ENCODE measurements at regions of chr12 and their contacts with region 1.

Region 1: GRCh38 chr12:53938326-53939140 is at the start of gene HOXC13:
- ATAC-seq: peak; percentile 87 to 93 (median 91)
- H3K4me3 ChIP-seq: peak within 1 kb of the TSS; percentile 24 to 39 (median 33)
- H3K27ac ChIP-seq: no peak within 1 kb of the TSS
- H3K4me1 ChIP-seq: peaks cover 0 to 4% of the 10 kb centered on the region in 2 donors
- total RNA-seq, gene HOXC13: 0.05 to 4.7 (median 0.38) TPM in 6 of 8 experiments, not detected in the others

Region 2: DNA sequence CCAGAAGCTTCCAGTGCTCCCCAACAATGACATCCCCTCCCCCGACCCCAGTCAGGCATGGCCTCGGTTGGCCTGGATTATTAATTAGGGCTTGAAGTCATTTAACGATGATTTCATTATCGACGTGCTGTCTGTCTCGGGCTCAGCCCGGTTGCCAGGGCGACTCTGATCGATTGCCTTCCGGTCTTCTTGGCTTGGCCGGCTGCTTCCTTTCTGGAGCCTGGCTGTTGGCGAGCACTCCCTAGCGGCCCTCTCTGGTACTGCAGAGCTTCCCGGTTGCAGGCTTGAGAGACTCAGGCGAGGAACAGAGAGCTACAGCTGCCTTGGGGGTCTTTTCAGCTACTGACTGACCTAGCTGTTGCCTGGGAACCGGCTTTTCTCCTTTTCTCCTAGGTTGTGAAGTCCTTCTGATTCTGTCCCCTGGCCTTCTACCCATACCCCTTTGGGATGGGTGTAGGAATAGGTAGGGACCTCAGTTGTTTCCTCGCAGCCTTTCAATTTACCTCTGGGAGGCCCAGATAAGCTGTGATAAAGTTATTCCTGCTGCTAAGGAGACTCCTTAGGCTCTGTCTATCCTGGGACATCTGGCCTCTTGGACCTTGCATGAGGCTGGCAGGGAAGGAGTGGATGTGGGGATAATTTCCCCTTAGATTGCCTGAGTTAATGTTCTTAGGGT is 181.3 kb before region 1 on chr12:
- in situ Hi-C with region 1: loop called in 1 of 9 experiments (anchors 25 kb)
- ATAC-seq: peak; percentile 70 to 89 (median 80)
- H3K4me3 ChIP-seq: peak overlapping the region in 2 of 5 donors; percentile 7 to 12
- H3K27ac ChIP-seq: peak overlapping the region in 1 of 2 donors; percentile 31
- H3K4me1 ChIP-seq: peaks cover 40 to 41% of the 10 kb centered on the region in 2 donors

Region 3: DNA sequence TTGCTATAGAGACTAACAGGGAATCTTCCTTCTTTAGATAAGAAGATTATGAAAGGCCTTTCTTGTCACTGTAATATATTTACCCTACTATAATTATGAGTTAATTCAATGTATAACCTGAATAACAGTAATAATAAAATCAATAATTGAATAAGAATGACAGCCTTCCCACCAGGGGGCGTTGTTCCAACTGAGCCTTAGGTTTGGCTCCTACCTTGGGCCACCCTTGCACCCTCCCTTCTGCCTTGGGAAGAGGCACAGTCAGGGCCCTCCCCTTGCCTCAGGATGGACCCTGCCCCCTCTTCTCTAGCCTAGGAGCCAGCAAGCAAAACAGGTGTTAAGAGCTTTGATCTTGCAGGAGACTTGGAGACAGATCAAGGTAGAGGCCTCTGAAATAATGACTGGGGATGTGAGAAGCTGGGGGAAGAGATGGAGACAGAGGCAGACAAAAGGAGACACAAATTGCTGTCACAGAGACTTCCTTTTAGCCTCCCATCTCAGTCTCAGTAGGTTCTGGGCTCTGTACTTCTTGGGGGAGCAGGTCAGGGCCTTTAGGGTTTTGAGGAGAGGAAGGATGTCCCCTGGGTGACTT is 146.7 kb before region 1 on chr12:
- in situ Hi-C with region 1: loop called in 1 of 9 experiments (anchors 25 kb)
- ATAC-seq: peak in 1 of 8 experiments; percentile 49
- H3K4me3 ChIP-seq: no peak overlapping the region
- H3K27ac ChIP-seq: no peak overlapping the region
- H3K4me1 ChIP-seq: peaks cover 0 to 12% of the 10 kb centered on the region in 2 donors

Region 4: GRCh38 chr12:53820516-53821306 is 117.8 kb before region 1 on chr12:
- in situ Hi-C with region 1: loop called in 1 of 9 experiments (anchors 25 kb)
- ATAC-seq: peak in 3 of 8 experiments; percentile 85 to 94 (median 87)
- H3K4me3 ChIP-seq: no peak overlapping the region
- H3K27ac ChIP-seq: no peak overlapping the region
- H3K4me1 ChIP-seq: no peaks in the 10 kb centered on the region

Region 5: DNA sequence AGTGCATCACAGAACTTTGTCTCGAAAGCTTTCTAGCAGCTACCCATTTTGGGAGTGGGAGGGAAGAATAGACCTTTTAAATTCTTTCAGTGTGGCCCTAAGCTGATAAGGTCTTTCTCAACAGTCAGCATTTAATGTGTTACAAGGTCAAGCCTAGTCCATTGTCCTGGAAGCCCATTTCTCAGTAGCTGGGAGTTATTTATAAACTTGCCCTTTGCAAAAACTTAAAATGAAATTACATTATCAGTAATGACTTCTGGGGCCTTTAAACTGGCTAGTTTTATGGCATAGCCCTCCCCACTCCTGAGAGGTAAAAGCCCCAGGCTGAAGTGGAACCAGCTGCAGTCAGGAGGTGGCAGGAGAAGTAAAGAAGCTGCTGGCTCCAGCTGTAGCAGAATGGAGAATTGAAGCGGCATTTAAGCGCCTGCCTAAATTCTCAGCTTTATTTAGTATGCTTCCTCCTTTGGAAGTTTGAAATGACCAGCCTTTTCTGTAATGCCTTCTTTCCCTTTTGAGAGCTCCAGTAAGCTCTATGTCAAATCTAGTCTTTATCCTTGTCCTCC is 398.8 kb after region 1 on chr12:
- in situ Hi-C with region 1: no loop called
- ATAC-seq: peak in 6 of 8 experiments; percentile 46 to 69 (median 52)
- H3K4me3 ChIP-seq: no peak overlapping the region
- H3K27ac ChIP-seq: peak overlapping the region in 1 of 2 donors; percentile 1
- H3K4me1 ChIP-seq: peaks cover 52 to 70% of the 10 kb centered on the region in 2 donors

Region 6: GRCh38 chr12:54641554-54641953 is 703.0 kb after region 1 on chr12:
- in situ Hi-C with region 1: no loop called
- ATAC-seq: no peak
- H3K4me3 ChIP-seq: no peak overlapping the region
- H3K27ac ChIP-seq: no peak overlapping the region
- H3K4me1 ChIP-seq: no peaks in the 10 kb centered on the region

Measured in motor neuron (in vitro differentiated cells).